CD4-positive, alpha-beta T cell (primary cell): ENCODE measurements at regions of chr20 and their contacts with region 1.

Region 1: GRCh38 chr20:1283522-1284510 is 17.7 kb downstream of the SNPH start:
- DNase-seq: peak in 2 of 14 experiments; percentile 12 to 16
- ATAC-seq: no peak
- H3K4me3 ChIP-seq: no peak overlapping the region
- H3K4me3 Mint-ChIP-seq: no peak overlapping the region
- H3K27ac ChIP-seq: no peak overlapping the region
- H3K27ac Mint-ChIP-seq: peak overlapping the region; percentile 24
- H3K4me1 ChIP-seq: peaks cover 39% of the 10 kb centered on the region
- H3K4me1 Mint-ChIP-seq: peaks cover 74% of the 10 kb centered on the region
- H3K27me3 ChIP-seq: no peaks in the 10 kb centered on the region
- H3K27me3 Mint-ChIP-seq: no peaks in the 10 kb centered on the region
- CTCF ChIP-seq: no peak

Region 2: DNA sequence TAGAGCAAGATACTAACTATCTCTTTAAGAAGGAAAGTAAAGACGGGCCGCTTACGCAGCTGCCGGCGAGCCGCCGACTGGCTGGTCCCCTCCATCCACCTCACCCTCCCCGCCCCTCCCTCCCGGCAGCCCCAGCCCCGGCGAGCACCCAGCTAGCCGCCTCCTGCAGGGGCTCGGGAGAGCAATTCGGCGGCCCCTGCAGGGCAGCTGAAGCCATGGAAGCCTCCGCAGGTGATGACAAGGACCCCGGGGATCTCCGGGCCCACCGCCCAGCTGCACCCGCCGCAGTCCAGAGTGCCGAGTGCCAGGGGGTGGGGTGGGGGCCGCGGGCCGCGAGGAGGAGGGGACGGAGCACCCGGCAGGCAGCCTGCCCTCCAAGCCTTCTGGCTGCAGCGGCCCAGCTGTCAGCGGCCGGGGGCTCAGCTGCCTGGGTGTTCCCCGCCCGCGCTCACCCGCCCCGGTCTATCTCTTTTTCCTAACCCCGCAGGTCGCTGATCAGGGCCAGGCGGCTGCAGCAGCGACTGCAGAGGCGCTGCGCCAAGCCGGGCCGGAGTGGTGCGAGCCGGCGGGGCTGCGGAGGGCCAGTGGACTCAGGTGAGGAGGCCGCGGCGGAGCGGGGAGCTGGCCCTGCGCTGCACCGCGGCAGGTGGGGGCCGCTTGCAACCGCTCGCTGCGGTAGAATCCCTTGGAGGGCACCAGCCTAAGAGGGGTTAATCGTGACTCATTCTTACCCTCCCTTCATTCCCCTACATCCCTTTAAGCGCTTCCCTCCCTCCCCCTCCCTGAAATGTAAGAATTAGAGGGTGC is 17.4 kb before region 1 on chr20 and contains the start of gene SNPH:
- CTCF ChIA-PET with region 1: interaction called, 4 read pairs
- POLR2A ChIA-PET with region 1: interaction called, 13 read pairs
- intact Hi-C with region 1: loop called (anchors 2 kb)
- DNase-seq: peak; percentile 61 to 90 (median 72)
- ATAC-seq: peak; percentile 80
- H3K4me3 ChIP-seq: peak within 1 kb of the TSS; percentile 60
- H3K4me3 Mint-ChIP-seq: peak within 1 kb of the TSS; percentile 90
- H3K27ac ChIP-seq: peak within 1 kb of the TSS; percentile 50 to 72
- H3K27ac Mint-ChIP-seq: peak within 1 kb of the TSS; percentile 90
- H3K4me1 ChIP-seq: peaks cover 35% of the 10 kb centered on the region
- H3K4me1 Mint-ChIP-seq: peaks cover 77% of the 10 kb centered on the region
- H3K27me3 ChIP-seq: no peaks in the 10 kb centered on the region
- H3K27me3 Mint-ChIP-seq: no peaks in the 10 kb centered on the region
- CTCF ChIP-seq: no peak
- total RNA-seq, gene SNPH: 12.8 to 13.0 TPM

Region 3: DNA sequence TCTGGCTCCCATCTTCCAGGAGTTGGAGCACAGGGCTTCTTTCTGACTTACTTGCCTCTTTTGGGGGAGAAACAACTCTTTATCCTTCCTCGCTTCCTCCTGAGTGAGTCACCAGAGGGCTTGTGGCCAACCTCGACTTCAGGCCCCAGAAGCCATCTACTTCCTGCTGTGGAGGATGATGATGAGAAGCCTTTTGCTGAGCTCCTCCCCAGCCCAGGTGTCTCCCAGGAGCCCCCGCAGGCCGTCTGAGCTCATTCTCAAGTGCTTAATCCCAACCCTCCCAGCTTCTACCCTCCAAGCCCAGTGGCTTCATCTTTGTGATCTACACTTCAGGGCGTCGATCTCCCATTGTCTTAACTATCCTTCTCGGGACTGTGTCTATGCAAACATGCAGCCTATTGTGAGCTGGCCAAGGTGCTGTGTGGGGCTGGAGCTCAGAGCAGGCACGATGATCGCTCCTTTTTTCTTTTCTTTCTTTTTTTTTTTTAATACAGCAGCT is 17.3 kb after region 1 on chr20:
- CTCF ChIA-PET with region 1: interaction called, 4 read pairs
- POLR2A ChIA-PET with region 1: interaction called, 11 read pairs
- intact Hi-C with region 1: no loop called
- DNase-seq: peak; percentile 21 to 76 (median 52)
- ATAC-seq: peak; percentile 89
- H3K4me3 ChIP-seq: no peak overlapping the region
- H3K4me3 Mint-ChIP-seq: peak overlapping the region; percentile 57
- H3K27ac ChIP-seq: peak overlapping the region; percentile 25 to 42
- H3K27ac Mint-ChIP-seq: peak overlapping the region; percentile 81
- H3K4me1 ChIP-seq: peaks cover 20% of the 10 kb centered on the region
- H3K4me1 Mint-ChIP-seq: peaks cover 27% of the 10 kb centered on the region
- H3K27me3 ChIP-seq: no peaks in the 10 kb centered on the region
- H3K27me3 Mint-ChIP-seq: no peaks in the 10 kb centered on the region
- CTCF ChIP-seq: no peak